SK-N-SH (cell line): ENCODE measurements at regions of chr2 and their contacts with region 1.

Region 1: DNA sequence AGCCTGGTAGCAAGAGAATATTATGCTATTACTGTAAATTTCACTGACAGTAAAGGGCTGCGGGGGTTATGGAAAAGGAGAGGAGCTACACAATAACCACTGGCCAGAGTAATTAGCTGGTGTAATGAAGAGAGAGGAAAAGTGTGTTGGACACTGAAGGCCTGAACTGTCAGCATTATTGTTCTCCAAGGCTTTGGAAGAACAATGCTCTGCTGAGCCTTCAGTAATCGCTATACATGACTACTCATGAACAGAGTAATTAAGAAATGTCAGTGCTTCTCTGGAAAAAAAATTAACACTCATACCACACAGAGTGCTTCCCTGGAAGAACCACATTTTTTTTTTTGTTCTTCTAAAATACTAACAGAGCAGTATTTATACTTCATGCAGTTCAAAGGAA is 931.3 kb downstream of the CPS1 start:
- DNase-seq: no peak
- H3K4me3 ChIP-seq: no peak overlapping the region
- H3K27ac ChIP-seq: no peak overlapping the region
- H3K4me1 ChIP-seq: no peaks in the 10 kb centered on the region
- H3K27me3 ChIP-seq: no peaks in the 10 kb centered on the region
- CTCF ChIP-seq: no peak
- EP300 ChIP-seq: no peak
- RAD21 ChIP-seq: no peak

Region 2: DNA sequence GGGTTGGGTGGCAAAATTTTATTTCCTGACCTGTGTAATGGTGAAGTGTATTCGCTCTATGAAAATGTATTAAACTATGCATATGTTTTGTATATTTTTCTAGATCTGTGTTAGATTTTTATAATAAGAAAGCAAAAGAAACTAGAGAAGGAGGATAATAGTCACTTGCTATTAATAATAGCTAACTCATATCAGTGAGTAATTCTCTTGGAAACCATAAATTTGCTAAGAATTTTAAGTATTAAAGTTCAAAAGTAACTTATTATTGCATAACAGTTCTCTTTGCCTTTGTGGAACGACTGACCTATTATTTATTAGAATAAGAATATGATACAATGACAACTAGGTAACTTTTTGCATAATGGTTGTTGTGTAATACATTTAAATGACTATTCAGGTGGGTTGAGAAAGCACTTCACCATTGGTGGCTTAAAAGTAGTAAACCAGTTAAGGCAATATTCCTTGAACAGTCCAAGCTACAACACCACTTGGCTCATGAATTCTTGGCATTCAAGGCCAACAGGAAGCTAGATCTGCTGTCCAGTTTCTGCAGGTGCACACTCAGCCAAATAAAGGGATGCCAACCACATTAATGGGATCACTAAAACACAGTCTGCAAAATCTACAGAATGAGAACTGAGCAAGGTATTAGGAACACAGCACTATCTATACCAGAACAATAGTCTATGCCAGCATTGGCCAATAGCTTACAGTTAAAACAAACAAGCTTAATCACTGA is 10.0 kb before region 1 on chr2:
- CTCF ChIA-PET with region 1: interaction called, 11 read pairs
- POLR2A ChIA-PET with region 1: no interaction called
- DNase-seq: no peak
- H3K4me3 ChIP-seq: no peak overlapping the region
- H3K27ac ChIP-seq: no peak overlapping the region
- H3K4me1 ChIP-seq: no peaks in the 10 kb centered on the region
- H3K27me3 ChIP-seq: no peaks in the 10 kb centered on the region
- CTCF ChIP-seq: no peak
- EP300 ChIP-seq: no peak
- RAD21 ChIP-seq: no peak